ENCODE measurements at regions of chr9 and their contacts with region 1.

Region 1: GRCh38 chr9:36407122-36407723 is 7.2 kb upstream of the RNF38 start:
- DNase-seq: peak in 3 of 5 donors; percentile 34 to 50 (median 36)
- ATAC-seq: peak; percentile 45 to 85 (median 83)
- H3K4me3 ChIP-seq: no peak overlapping the region
- H3K27ac ChIP-seq: no peak overlapping the region
- H3K4me1 ChIP-seq: peaks cover 0 to 11% (median 0%) of the 10 kb centered on the region in 12 donors
- H3K27me3 ChIP-seq: no peaks in the 10 kb centered on the region
- CTCF ChIP-seq: peak; percentile 83 to 97 (median 93)
- POLR2A ChIP-seq: no peak

Region 2: GRCh38 chr9:36441966-36442365 is 34.7 kb after region 1 on chr9:
- intact Hi-C with region 1: loop called in 2 of 10 experiments (anchors 5 kb)
- DNase-seq: no peak
- ATAC-seq: no peak
- H3K4me3 ChIP-seq: no peak overlapping the region
- H3K27ac ChIP-seq: no peak overlapping the region
- H3K4me1 ChIP-seq: peaks cover 0 to 42% (median 21%) of the 10 kb centered on the region in 12 donors
- H3K27me3 ChIP-seq: no peaks in the 10 kb centered on the region
- CTCF ChIP-seq: no peak
- POLR2A ChIP-seq: no peak

Region 3: GRCh38 chr9:36450110-36450732 is 43.0 kb after region 1 on chr9:
- intact Hi-C with region 1: loop called (anchors 2 to 5 kb)
- DNase-seq: no peak
- ATAC-seq: no peak
- H3K4me3 ChIP-seq: no peak overlapping the region
- H3K27ac ChIP-seq: no peak overlapping the region
- H3K4me1 ChIP-seq: peaks cover 0 to 42% (median 14%) of the 10 kb centered on the region in 12 donors
- H3K27me3 ChIP-seq: no peaks in the 10 kb centered on the region
- CTCF ChIP-seq: peak; percentile 50 to 80 (median 71)
- POLR2A ChIP-seq: no peak

Region 4: DNA sequence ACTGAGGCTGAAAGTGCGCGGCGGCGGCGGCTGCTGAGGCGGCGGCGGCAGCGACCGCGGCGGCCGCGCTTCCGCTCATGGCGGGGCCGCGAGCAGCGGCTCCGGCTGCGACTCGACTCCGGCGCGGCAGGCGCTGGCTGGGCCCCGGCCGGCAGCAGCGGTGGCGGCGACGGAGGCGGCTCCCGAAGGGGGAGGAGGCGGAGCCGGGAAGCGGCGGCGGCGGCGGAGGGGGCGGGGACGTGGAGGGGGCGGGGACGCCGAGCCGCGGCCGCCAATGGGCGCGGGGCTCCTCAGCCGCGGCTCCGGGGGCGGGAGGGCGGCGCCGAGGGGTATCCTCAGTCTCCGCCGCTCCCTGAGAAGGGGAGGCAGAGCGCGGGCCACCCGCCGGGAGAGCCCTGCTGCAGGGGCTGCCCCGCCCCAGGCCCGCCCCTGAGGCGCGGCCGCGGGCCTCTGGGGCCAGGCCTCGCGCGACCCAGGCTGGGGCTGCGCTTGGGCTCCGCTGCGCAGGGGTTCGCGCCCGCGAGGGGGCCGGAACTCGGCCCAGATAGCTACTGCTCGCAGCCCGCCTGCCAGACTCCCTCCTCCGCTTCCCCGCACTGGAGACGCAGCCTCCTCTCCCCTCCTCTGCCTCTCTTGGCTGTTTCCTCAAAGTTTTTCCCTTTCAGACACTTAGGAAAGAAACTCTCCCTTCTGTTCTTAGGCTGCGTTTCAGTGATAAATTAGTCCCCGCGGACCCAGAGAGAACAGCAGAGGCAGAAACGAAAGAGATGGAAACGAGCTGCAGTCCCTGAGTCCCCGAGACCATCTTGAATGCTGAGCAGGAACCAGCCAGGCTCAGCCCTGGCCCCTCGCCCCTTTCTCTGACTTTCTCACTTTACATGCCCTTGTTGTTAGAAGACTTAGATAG is 80.5 kb after region 1 on chr9:
- intact Hi-C with region 1: loop called in 5 of 10 experiments (anchors 2 to 10 kb)
- DNase-seq: peak; percentile 93 to 96 (median 94)
- ATAC-seq: peak; percentile 96 to 99 (median 98)
- H3K4me3 ChIP-seq: peak overlapping the region; percentile 15 to 99 (median 86)
- H3K27ac ChIP-seq: peak overlapping the region; percentile 86 to 97 (median 92)
- H3K4me1 ChIP-seq: peaks cover 3 to 34% (median 19%) of the 10 kb centered on the region in 12 donors
- H3K27me3 ChIP-seq: no peaks in the 10 kb centered on the region
- CTCF ChIP-seq: peak in 4 of 12 donors; percentile 3 to 33 (median 12)
- POLR2A ChIP-seq: peak in 1 of 2 donors; percentile 88

Region 5: DNA sequence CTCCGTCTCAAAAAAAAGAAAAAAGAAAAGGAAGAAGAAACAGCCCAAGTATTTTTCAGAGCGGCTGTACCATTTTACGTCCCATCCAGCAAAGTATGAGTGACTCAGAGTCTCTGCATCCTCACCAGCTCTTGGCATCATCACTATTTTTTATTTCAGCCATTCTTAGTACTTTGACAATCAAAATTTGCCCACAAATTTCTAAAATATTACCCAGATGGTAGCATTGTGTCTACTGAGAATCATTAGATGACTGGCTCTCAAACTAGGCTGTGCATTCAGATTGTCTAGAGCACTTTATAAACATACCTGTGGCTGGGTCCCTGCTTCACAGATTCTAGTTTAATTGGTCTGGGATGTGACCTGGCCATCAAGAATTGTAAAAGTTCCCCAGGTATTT is 143.9 kb after region 1 on chr9:
- intact Hi-C with region 1: loop called (anchors 1 to 2 kb)
- DNase-seq: no peak
- ATAC-seq: no peak
- H3K4me3 ChIP-seq: no peak overlapping the region
- H3K27ac ChIP-seq: no peak overlapping the region
- H3K4me1 ChIP-seq: no peaks in the 10 kb centered on the region
- H3K27me3 ChIP-seq: peaks cover 0 to 5% (median 0%) of the 10 kb centered on the region in 9 donors
- CTCF ChIP-seq: no peak
- POLR2A ChIP-seq: no peak

Region 6: GRCh38 chr9:36560857-36561221 is 153.6 kb after region 1 on chr9:
- intact Hi-C with region 1: loop called in 5 of 10 experiments (anchors 1 to 2 kb)
- DNase-seq: no peak
- ATAC-seq: no peak
- H3K4me3 ChIP-seq: no peak overlapping the region
- H3K27ac ChIP-seq: no peak overlapping the region
- H3K4me1 ChIP-seq: peaks cover 0 to 6% (median 0%) of the 10 kb centered on the region in 12 donors
- H3K27me3 ChIP-seq: no peaks in the 10 kb centered on the region
- CTCF ChIP-seq: no peak
- POLR2A ChIP-seq: no peak